Heart right ventricle (tissue), 16 donors: ENCODE measurements at regions of chr18 and their contacts with region 1.

Region 1: GRCh38 chr18:34001376-34001775 is 223.3 kb downstream of the NOL4 start:
- DNase-seq: no peak
- ATAC-seq: no peak
- H3K4me3 ChIP-seq: no peak overlapping the region
- H3K27ac ChIP-seq: no peak overlapping the region
- H3K4me1 ChIP-seq: no peaks in the 10 kb centered on the region
- H3K27me3 ChIP-seq: no peaks in the 10 kb centered on the region
- CTCF ChIP-seq: no peak

Region 2: DNA sequence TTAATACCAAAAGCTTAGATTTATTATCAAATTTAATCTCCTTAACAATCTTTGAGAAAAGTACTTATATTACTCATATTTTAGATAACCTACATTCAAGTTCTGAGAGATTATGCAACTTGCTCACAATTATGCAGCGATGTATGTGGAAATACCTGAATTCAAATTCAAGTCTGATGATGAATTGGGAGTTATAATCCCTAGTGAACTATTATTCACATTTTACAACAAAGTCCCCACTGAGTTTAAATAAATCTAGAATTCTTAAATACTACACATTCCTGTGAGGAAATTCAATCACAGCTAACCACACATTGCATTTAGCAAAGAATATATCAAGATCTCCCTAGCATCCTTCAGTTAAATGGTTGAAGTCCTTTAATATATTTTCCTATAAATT is 55.0 kb before region 1 on chr18:
- intact Hi-C with region 1: loop called in 1 of 10 experiments (anchors 10 kb)
- DNase-seq: no peak
- ATAC-seq: no peak
- H3K4me3 ChIP-seq: no peak overlapping the region
- H3K27ac ChIP-seq: no peak overlapping the region
- H3K4me1 ChIP-seq: no peaks in the 10 kb centered on the region
- H3K27me3 ChIP-seq: no peaks in the 10 kb centered on the region
- CTCF ChIP-seq: no peak

Region 3: DNA sequence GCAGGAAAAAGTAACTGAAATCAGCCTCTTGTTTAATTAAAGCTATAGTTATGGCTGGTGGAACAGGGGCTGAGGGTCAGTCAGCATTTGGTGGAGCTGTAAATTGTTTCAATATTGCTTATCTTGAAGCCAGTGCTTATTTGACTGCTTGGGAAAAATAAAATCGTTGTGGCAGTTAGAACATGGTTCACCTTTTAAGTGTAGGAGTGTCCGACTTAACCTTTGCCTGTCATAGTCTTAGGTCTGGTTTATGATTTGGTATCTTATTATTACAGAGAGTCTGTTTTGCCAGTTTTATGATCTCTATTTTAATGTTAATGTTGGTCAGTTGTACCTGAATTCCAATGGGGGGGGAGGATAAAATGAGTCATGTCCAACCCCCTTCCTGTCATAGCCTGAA is 250.5 kb after region 1 on chr18:
- intact Hi-C with region 1: no loop called
- DNase-seq: no peak
- ATAC-seq: no peak
- H3K4me3 ChIP-seq: no peak overlapping the region
- H3K27ac ChIP-seq: no peak overlapping the region
- H3K4me1 ChIP-seq: no peaks in the 10 kb centered on the region
- H3K27me3 ChIP-seq: peaks cover 0 to 5% (median 0%) of the 10 kb centered on the region in 7 donors
- CTCF ChIP-seq: no peak